Dendritic cell treated with granulocyte-macrophage colony-stimulating factor and Interleukin-4, amounts not matched to agents 40 ng/mL and 50 ng/mL, for 4 days (primary cell): ENCODE measurements at regions of chr2 and their contacts with region 1.

Region 1: DNA sequence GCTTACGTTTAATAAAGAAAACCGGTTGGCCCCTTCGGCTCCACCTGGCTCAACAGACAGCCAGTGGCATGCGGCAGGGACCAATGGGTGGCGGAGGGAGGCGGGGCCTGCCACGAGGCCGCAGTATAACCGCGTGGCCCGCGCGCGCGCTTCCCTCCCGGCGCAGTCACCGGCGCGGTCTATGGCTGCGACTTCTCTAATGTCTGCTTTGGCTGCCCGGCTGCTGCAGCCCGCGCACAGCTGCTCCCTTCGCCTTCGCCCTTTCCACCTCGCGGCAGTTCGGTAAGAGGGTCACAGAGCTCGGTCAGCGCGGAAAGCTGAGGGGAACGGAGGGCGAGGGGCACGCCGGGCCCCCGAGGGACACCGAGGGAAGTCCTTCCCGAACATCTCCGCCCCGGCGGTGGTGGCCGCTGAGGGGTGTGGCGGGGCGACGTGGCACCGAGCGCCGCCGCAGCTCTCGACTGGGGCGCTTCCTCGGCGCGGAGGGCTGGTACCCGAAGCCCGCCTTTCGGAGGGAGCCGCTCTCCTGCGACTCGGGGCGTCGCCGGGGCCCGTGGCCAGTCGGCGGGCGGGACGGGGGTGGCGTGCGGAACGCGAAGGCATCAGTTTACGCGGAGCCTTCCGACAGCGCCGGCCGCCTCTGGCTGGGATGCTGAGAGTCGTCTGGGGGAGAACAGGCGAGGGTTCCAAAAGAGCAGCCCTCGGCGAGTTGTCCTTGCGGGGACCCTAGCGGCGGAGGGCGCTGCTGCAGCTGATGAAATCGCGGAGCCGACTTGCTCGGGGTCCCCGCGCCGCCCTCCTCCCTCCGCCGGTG is at the start of gene MTHFD2:
- H3K4me3 Mint-ChIP-seq: peak within 1 kb of the TSS; percentile 95
- H3K27ac Mint-ChIP-seq: peak within 1 kb of the TSS; percentile 92
- H3K4me1 Mint-ChIP-seq: peaks cover 44% of the 10 kb centered on the region
- H3K27me3 Mint-ChIP-seq: no peaks in the 10 kb centered on the region

Region 2: GRCh38 chr2:74168739-74169138 is 29.9 kb before region 1 on chr2:
- intact Hi-C with region 1: loop called (anchors 5 kb)
- H3K4me3 Mint-ChIP-seq: no peak overlapping the region
- H3K27ac Mint-ChIP-seq: no peak overlapping the region
- H3K4me1 Mint-ChIP-seq: peaks cover 34% of the 10 kb centered on the region
- H3K27me3 Mint-ChIP-seq: no peaks in the 10 kb centered on the region

Region 3: DNA sequence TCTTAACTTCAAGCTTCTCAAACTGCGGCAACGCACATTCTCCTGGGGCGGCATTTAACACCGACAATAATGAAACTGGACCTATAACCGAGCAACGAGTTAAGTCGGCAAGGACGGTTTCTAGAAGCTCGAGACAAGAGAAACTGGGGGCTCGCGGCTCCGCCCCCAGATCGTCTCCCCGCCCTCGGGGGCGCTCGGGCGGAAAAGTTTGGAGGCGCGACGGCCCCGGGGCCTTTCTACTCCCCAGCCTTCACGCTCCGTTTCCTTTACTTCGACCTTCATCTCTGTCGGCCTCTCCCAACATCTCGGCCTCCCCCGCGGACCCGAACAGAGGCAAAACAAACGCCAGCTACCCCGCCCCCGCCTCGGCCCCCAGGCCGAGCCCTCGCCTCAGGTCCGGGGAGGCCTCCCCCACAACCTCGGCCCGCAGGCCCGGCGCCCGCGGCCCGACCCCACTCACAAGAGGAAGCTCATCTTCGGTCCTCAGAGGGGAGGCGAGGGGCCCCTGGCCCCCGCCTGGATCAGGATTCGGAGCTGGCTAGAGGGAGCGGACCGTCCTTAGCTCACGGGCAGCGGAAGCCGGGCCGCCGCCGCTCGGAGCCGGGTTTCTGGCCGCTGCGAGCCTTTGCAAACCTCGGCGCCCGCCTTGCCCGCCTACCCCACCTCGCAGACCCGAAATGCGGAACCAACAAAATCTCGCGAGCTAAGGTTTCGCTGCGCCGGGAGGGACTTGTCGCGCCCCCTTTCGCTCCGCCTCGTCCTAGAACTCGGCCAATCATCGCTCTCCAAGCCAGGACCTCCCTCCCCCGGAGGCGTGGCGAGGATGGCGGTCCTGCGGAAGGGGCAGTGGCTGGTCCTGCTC is 20.2 kb before region 1 on chr2 and contains the start of gene MOB1A:
- intact Hi-C with region 1: loop called (anchors 1 kb)
- H3K4me3 Mint-ChIP-seq: peak within 1 kb of the TSS; percentile 85
- H3K27ac Mint-ChIP-seq: peak within 1 kb of the TSS; percentile 99
- H3K4me1 Mint-ChIP-seq: peaks cover 56% of the 10 kb centered on the region
- H3K27me3 Mint-ChIP-seq: no peaks in the 10 kb centered on the region

Region 4: GRCh38 chr2:74261204-74261864 is 62.7 kb after region 1 on chr2:
- intact Hi-C with region 1: no loop called
- H3K4me3 Mint-ChIP-seq: no peak overlapping the region
- H3K27ac Mint-ChIP-seq: no peak overlapping the region
- H3K4me1 Mint-ChIP-seq: no peaks in the 10 kb centered on the region
- H3K27me3 Mint-ChIP-seq: no peaks in the 10 kb centered on the region